ENCODE measurements at regions of chr9 and their contacts with region 1.

Region 1: GRCh38 chr9:12723409-12724028 is 30.3 kb downstream of the TYRP1 start:
- DNase-seq: no peak

Region 2: GRCh38 chr9:12775679-12776512 is 52.4 kb after region 1 on chr9:
- intact Hi-C with region 1: loop called (anchors 10 kb)
- DNase-seq: peak; percentile 41 to 94 (median 60)

Region 3: DNA sequence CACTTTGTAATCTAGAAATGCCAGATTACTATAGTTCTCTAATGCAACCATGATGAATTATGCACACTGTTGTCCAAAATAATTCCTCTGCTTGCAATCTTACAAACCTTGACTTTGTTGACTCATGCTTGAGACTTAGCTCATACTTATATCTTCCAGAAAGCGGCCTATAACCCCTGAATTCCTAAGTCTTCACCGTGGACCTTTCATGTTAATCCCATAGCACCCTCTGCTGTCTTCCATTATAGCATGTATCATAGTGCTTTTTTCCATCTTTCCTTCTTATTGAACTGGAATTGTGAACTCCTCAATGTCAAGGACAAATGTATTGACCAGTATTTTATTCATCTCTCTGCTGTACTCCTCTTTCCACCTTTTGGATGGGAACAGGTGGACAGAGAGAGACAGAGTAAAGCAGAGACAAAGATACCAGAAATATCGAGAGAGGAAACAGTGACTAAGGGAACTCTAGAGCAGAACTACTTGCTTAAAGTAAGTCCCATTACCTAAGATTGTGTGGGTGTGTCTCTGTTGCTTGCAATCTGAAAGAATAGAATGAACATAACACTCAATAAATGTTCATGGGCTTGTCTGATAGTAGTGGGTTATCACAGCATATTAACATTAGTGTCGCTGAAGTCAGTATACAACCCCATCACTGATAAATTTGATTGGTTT is 161.4 kb after region 1 on chr9:
- intact Hi-C with region 1: loop called (anchors 1 kb)
- DNase-seq: no peak

Region 4: GRCh38 chr9:13088720-13089427 is 365.4 kb after region 1 on chr9:
- intact Hi-C with region 1: loop called (anchors 5 kb)
- DNase-seq: peak in 7 of 10 donors; percentile 16 to 87 (median 19)

Measured in posterior cingulate gyrus (tissue), 11 donors.